OCI-LY7 (cell line): ENCODE measurements at regions of chr14 and their contacts with region 1.

Region 1: GRCh38 chr14:25875475-25875874 is 722.4 kb downstream of the NOVA1 start:
- DNase-seq: no peak
- H3K4me3 ChIP-seq: no peak overlapping the region
- H3K27ac ChIP-seq: no peak overlapping the region
- H3K4me1 ChIP-seq: no peaks in the 10 kb centered on the region
- CTCF ChIP-seq: no peak

Region 2: DNA sequence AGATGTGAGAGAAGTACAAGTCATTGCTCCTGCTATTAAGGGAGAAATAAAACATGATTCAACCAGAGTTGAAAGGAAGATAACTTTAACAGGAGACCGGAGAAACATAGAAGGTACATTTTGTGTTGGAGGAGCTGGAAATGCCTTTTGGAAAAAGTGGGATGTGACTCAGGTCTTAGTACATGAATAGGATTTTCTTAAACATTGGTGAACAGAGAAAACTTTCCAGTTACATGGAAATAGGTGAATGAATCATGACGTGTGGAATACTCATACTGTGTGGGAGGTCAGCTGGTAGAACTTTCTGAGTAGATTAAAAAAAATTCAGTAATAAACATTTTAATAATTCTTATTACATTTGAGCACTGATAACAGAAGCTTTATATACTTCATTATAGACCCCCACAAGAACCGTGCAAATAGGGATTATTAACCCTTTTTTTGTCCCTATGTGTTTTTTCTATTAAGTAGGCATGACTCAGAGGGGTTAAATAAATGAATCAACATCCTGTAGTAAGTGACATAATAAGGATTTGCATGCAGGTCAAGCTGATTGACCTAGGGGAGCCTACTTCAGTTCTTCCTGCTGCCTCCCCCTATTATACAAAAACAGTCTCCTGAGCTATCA is 11.9 kb after region 1 on chr14:
- CTCF ChIA-PET with region 1: no interaction called
- POLR2A ChIA-PET with region 1: interaction called, 13 read pairs
- intact Hi-C with region 1: no loop called
- DNase-seq: no peak
- H3K4me3 ChIP-seq: no peak overlapping the region
- H3K27ac ChIP-seq: no peak overlapping the region
- H3K4me1 ChIP-seq: no peaks in the 10 kb centered on the region
- CTCF ChIP-seq: no peak

Region 3: GRCh38 chr14:25929881-25930615 is 54.6 kb after region 1 on chr14:
- CTCF ChIA-PET with region 1: no interaction called
- POLR2A ChIA-PET with region 1: no interaction called
- intact Hi-C with region 1: no loop called
- DNase-seq: no peak
- H3K4me3 ChIP-seq: no peak overlapping the region
- H3K27ac ChIP-seq: no peak overlapping the region
- H3K4me1 ChIP-seq: no peaks in the 10 kb centered on the region
- CTCF ChIP-seq: no peak